Psoas muscle (tissue), 8 donors: ENCODE measurements at regions of chr12 and their contacts with region 1.

Region 1: GRCh38 chr12:53352331-53353256 is 16.4 kb upstream of the SP7 start:
- DNase-seq: peak; percentile 74 to 81
- ATAC-seq: peak; percentile 96 to 99 (median 98)
- H3K4me3 ChIP-seq: no peak overlapping the region
- H3K27ac ChIP-seq: no peak overlapping the region
- H3K4me1 ChIP-seq: no peaks in the 10 kb centered on the region
- H3K27me3 ChIP-seq: no peaks in the 10 kb centered on the region
- CTCF ChIP-seq: peak; percentile 92

Region 2: DNA sequence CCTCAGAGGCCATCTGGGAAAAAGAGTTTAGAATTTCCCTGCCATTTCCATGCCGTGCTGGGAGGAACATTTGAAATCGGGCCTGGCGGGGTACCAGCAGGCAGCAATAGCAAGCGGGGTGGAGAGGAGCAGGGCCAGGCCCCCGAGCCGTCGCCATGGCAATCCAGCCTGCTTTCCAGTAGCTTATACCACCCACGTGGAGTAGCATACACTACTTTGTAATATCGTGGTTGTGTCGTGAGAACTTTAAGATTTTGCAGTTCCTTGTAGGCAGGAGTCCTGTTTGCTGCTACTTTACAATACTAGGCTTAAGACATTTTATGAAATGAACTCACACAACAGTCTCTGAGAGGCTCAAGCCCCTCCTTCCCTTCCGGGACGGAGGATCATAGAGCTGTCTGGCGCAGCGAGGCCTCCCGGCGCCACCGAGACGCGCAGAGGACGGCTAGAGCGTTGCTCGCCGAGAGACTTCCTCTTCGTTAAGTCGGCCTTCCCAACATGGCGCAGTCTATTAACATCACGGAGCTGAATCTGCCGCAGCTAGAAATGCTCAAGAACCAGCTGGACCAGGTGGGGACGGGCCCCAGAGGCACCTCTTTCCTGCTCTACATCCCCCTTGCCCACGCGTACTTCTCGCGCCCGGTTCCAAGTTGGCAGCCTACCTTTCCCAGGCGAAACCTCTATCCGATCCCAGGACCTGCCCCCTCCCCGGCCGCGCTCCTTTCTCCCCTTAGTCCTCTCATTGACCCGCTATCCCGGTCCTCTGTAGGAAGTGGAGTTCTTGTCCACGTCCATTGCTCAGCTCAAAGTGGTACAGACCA is 57.3 kb before region 1 on chr12 and contains the start of gene PFDN5:
- intact Hi-C with region 1: no loop called
- DNase-seq: peak; percentile 87 to 94
- ATAC-seq: peak; percentile 87 to 91 (median 90)
- H3K4me3 ChIP-seq: peak within 1 kb of the TSS; percentile 86
- H3K27ac ChIP-seq: peak within 1 kb of the TSS; percentile 88
- H3K4me1 ChIP-seq: peaks cover 28% of the 10 kb centered on the region
- H3K27me3 ChIP-seq: no peaks in the 10 kb centered on the region
- CTCF ChIP-seq: peak; percentile 13
- total RNA-seq, gene PFDN5: 239 to 282 (median 266) TPM

Region 3: DNA sequence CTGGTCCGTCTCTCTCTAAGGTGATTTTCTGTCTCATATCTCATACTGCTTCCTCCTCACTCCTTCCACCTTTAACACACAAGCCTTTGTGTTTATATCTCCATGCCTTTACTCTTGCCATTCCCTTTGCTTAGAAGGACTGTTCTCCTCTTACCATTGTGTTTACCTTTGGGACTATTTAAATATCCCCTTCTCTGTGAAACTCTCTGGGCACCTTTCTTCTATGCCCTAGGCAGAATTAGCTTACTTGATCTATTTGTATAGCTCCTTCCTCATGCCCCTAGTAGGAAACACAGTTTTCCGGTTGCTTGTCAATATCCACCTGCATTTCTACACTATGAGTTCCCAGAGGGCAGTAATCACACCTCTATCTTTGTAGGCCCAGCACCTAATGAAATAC is 67.2 kb after region 1 on chr12:
- intact Hi-C with region 1: loop called (anchors 1 to 2 kb)
- DNase-seq: no peak
- ATAC-seq: no peak
- H3K4me3 ChIP-seq: no peak overlapping the region
- H3K27ac ChIP-seq: no peak overlapping the region
- H3K4me1 ChIP-seq: peaks cover 2% of the 10 kb centered on the region
- H3K27me3 ChIP-seq: no peaks in the 10 kb centered on the region
- CTCF ChIP-seq: no peak

Region 4: GRCh38 chr12:53424626-53425514 is 72.3 kb after region 1 on chr12:
- intact Hi-C with region 1: loop called (anchors 1 to 2 kb)
- DNase-seq: no peak
- ATAC-seq: no peak
- H3K4me3 ChIP-seq: no peak overlapping the region
- H3K27ac ChIP-seq: no peak overlapping the region
- H3K4me1 ChIP-seq: peaks cover 7% of the 10 kb centered on the region
- H3K27me3 ChIP-seq: no peaks in the 10 kb centered on the region
- CTCF ChIP-seq: no peak

Region 5: GRCh38 chr12:53508534-53509199 is 156.1 kb after region 1 on chr12:
- intact Hi-C with region 1: loop called (anchors 2 to 5 kb)
- DNase-seq: peak; percentile 81 to 90
- ATAC-seq: peak; percentile 81 to 90 (median 88)
- H3K4me3 ChIP-seq: no peak overlapping the region
- H3K27ac ChIP-seq: peak overlapping the region; percentile 14
- H3K4me1 ChIP-seq: peaks cover 15% of the 10 kb centered on the region
- H3K27me3 ChIP-seq: no peaks in the 10 kb centered on the region
- CTCF ChIP-seq: peak; percentile 86